Activated T-helper 2 cell treated with anti-CD3 and anti-CD28 coated beads, Interferon-gamma antibody, Interleukin-2, Interleukin-4, amounts not matched to agents 10 μg/mL and 5 μg/mL and 100 μg/mL, durations not matched to agents 14 hours and 24 hours and 36 hours (primary cell): ENCODE measurements at regions of chr3 and their contacts with region 1.

Region 1: DNA sequence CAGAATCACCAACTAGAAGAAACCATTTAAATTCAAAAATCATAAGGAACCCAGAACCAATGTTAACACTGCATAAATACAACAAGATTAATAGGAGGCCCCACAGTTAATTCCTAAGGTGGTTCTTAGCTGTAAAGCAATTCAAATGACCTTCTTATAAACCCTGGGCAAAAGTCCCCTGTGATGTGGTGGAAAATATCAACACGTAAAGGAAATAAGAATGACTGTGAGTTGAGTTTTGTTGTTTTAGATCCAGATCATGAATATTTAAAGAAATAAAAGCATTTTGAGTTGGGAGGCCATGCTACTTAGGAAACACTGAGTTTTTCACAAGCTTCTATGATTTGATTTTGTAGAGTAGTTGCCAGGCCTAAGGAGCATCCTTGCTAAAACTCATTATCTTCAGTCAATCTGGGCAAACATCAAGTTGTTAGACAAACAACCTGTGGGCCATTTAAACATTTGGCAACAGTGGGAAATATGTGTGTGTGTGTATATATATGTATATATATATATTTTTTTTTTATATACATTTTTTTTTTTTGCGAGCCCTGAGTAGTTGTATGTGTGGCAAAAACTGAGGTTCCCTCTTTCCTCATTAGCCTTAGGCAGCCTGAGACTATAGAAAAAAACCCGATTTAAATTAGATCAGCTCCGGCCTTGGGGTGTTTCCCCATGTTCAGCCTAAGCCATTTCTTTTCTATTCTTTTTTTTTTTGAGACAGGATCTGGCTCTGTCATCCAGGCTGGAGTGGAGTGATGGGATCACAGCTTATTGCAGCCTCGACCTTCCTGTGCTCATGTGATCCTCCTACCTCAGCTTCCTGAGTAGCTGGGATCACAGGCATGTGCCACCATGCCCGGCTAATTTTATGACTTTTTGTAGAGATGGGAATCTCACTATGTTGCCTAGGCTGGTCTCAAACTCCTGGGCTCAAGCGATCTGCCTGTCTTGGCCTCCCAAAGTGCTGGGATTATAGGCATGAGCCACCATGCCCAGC is 8.0 kb upstream of the PXK start:
- DNase-seq: no peak
- H3K4me3 Mint-ChIP-seq: peak overlapping the region; percentile 50
- H3K27ac Mint-ChIP-seq: peak overlapping the region; percentile 93
- H3K4me1 Mint-ChIP-seq: peaks cover 39% of the 10 kb centered on the region
- H3K27me3 Mint-ChIP-seq: no peaks in the 10 kb centered on the region

Region 2: GRCh38 chr3:58355179-58355578 is 30.5 kb after region 1 on chr3:
- intact Hi-C with region 1: loop called (anchors 1 kb)
- DNase-seq: no peak
- H3K4me3 Mint-ChIP-seq: no peak overlapping the region
- H3K27ac Mint-ChIP-seq: no peak overlapping the region
- H3K4me1 Mint-ChIP-seq: peaks cover 70% of the 10 kb centered on the region
- H3K27me3 Mint-ChIP-seq: no peaks in the 10 kb centered on the region

Region 3: DNA sequence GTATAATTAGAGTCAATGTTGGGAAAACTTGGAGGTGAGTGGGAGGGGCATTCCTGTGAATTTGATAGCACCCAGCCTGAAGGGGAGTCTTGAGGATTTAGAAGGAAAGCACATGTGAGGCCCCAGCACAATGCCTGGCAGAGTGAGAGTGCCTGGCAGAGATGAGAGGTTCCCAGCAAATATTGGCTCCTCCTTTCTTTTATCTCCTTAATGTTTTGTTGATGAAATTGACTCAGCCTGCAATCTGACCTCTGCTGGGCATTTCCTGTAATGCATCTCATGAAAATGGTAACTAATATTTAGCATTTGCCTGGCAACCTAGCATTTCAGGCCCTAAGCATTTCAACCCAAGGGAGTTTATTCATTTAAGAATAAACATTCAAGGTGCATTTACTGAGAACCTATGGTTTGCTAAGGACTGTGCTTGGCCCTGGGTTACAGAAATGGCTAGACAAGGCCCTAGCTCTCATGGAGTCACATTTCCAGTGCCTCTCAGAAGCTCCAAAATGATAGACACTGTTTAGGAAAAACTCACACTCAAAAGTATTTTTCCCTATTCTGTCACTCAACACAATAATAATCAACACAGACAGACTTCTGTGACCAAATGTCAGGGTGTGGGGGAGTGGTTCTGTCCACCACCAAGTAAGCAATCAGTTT is 90.0 kb after region 1 on chr3:
- intact Hi-C with region 1: loop called (anchors 1 kb)
- DNase-seq: peak; percentile 37
- H3K4me3 Mint-ChIP-seq: no peak overlapping the region
- H3K27ac Mint-ChIP-seq: peak overlapping the region; percentile 45
- H3K4me1 Mint-ChIP-seq: peaks cover 14% of the 10 kb centered on the region
- H3K27me3 Mint-ChIP-seq: no peaks in the 10 kb centered on the region

Region 4: GRCh38 chr3:58433400-58434169 is 108.9 kb after region 1 on chr3 and contains the start of gene PDHB:
- intact Hi-C with region 1: loop called (anchors 1 kb)
- DNase-seq: peak; percentile 87
- H3K4me3 Mint-ChIP-seq: peak within 1 kb of the TSS; percentile 90
- H3K27ac Mint-ChIP-seq: peak within 1 kb of the TSS; percentile 90
- H3K4me1 Mint-ChIP-seq: peaks cover 36% of the 10 kb centered on the region
- H3K27me3 Mint-ChIP-seq: peaks cover 5% of the 10 kb centered on the region
- total RNA-seq, gene PDHB: 79.3 and 82.7 TPM in 2 replicates

Region 5: GRCh38 chr3:58491506-58492402 is 167.1 kb after region 1 on chr3 and contains the start of gene KCTD6:
- intact Hi-C with region 1: loop called (anchors 5 kb)
- DNase-seq: peak; percentile 87
- H3K4me3 Mint-ChIP-seq: peak within 1 kb of the TSS; percentile 96
- H3K27ac Mint-ChIP-seq: peak within 1 kb of the TSS; percentile 84
- H3K4me1 Mint-ChIP-seq: peaks cover 37% of the 10 kb centered on the region
- H3K27me3 Mint-ChIP-seq: peaks cover 35% of the 10 kb centered on the region
- total RNA-seq, gene KCTD6: 7.2 and 8.7 TPM in 2 replicates

Region 6: GRCh38 chr3:58630076-58630709 is 305.5 kb after region 1 on chr3:
- intact Hi-C with region 1: loop called (anchors 5 kb)
- DNase-seq: peak; percentile 30
- H3K4me3 Mint-ChIP-seq: no peak overlapping the region
- H3K27ac Mint-ChIP-seq: no peak overlapping the region
- H3K4me1 Mint-ChIP-seq: no peaks in the 10 kb centered on the region
- H3K27me3 Mint-ChIP-seq: no peaks in the 10 kb centered on the region